MCF 10A (cell line): ENCODE measurements at regions of chr1 and their contacts with region 1.

Region 1: DNA sequence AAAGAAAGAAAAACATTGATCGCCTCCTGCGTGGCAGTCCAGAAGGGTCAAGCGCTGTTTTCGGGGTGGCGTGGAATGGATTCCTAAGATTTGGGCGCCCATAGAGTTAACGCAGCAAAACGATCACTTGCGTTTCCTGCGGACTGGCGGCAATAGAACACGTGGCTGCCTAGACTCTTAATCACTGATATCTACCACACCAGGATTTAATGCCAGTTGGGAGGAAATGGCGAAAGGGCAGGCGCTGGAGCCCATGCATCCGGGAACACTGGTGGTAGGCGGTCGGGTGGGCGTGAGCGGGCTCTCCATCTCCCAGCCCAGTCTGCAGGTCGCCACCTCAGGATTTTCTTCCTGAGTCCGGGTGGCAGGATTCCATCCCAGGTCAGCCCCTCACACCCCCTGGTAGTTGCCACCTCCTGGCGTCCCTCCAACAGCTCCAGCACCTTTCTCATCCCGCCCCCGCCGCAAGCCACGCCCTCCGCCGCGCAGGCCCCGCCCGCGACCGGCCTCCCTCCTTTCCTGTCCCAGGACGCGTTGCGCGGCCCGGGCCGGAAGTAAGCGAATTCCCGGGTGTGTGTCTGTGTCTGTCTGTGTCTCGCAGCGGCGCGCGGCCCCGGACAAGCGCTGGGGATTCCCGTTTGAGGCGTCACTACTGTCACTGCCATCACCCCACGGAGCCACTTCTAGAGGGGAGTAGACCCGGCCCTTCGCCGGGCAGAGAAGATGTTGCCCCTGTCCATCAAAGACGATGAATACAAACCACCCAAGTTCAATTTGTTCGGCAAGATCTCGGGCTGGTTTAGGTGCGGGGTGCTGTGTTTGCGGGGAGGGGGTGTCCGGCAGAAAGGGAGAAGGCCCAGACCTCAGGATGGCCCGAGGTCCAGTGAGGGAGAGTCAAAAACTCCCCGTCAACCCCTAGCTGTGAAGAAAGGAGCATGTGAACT is at the start of gene SLC30A7:
- DNase-seq: peak; percentile 96
- H3K4me3 Mint-ChIP-seq: peak within 1 kb of the TSS; percentile 96
- H3K27ac Mint-ChIP-seq: peak within 1 kb of the TSS; percentile 99
- H3K4me1 Mint-ChIP-seq: peaks cover 6% of the 10 kb centered on the region
- H3K27me3 Mint-ChIP-seq: no peaks in the 10 kb centered on the region
- CTCF ChIP-seq: no peak
- total RNA-seq, gene SLC30A7: 55.0 and 59.5 TPM in 2 replicates

Region 2: DNA sequence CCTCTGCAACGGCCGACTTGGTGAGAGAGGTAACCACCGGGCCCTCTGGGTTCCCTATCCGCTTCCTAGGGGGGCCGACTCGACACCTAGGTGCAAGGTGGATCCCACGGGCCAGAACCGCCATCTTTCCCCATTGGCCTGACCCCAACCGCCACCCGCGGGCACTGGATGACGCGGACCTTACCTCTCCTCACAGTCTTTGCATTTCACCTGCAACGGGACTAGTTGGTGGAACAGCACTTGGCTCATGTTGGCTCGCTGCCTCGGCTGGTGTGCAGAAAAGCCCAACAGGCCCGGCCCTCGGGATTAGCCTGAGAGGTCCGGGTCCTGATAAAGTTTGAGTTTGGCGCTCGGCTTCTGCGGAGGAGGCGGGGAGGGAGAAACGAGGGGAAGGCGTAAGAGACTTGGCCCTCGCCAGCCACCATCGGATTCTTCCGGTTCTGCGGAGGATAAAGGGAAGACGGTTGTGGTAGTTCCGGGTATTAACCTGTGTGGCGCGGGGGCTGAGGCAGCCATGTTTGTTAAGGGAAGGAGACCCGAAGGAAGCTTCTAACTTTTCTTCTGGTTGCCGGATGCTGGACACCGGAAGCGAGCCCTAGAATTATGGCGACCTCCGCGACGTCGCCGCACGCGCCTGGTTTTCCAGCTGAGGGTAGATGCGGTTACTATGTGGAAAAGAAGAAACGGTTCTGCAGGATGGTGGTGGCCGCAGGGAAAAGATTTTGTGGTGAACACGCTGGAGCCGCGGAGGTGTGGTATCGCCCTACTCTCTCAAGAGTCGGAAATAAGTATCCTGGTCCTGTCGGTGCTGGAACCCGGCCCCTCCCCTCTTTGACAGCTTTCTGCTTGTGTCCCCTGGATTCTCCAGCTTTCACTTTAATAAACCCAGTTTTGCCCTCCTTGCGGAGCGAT is 763.0 kb before region 1 on chr1 and contains the starts of genes SASS6 and TRMT13:
- CTCF ChIA-PET with region 1: no interaction called
- POLR2A ChIA-PET with region 1: interaction called, 7 read pairs
- intact Hi-C with region 1: loop called (anchors 10 kb)
- DNase-seq: peak; percentile 98
- H3K4me3 Mint-ChIP-seq: peak within 1 kb of the TSS; percentile 86
- H3K27ac Mint-ChIP-seq: peak within 1 kb of the TSS; percentile 75
- H3K4me1 Mint-ChIP-seq: peaks cover 19% of the 10 kb centered on the region
- H3K27me3 Mint-ChIP-seq: no peaks in the 10 kb centered on the region
- CTCF ChIP-seq: no peak
- total RNA-seq, gene SASS6: 6.6 and 7.5 TPM in 2 replicates
- total RNA-seq, gene TRMT13: 24.2 and 25.5 TPM in 2 replicates

Region 3: DNA sequence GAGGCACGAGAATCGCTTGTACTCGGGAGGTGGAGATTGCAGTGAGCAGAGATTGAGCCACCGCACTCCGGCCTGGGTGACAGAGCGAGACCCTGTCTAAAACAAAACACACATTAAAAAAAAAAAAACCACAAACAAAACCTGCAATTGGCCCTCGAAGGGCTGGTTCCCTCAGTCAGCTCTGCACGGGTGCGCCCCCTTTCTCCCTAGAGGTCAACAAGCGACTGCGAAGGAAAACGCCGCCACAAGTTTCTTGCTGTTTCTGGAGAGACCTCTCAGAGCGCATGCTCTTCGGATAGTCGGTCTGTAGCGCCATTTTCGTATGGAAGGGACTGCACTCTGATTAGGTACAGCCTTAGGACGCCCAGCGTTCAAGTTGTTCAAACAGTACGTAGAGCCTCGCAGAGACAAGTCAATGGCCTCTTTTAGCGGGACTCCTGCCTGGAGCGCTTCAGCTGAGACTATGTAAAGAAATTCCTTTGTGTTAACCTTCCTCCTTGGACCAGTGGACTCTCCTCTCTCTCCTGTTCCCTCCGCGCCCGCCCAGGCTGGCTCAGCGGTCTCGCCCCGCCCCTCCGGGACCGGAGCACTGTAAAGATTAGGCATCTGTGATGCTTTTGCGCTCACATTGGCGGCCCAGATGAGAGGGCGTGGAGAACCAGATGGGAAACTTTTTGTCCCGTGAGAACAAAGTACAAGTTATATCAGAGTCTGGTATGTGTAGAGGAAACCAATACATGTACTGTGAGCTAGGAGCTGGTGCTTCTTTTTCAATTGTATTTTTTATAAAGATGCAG is 544.5 kb before region 1 on chr1:
- CTCF ChIA-PET with region 1: interaction called, 3 read pairs
- POLR2A ChIA-PET with region 1: interaction called, 15 read pairs
- intact Hi-C with region 1: no loop called
- DNase-seq: peak; percentile 91
- H3K4me3 Mint-ChIP-seq: peak overlapping the region; percentile 92
- H3K27ac Mint-ChIP-seq: peak overlapping the region; percentile 86
- H3K4me1 Mint-ChIP-seq: peaks cover 22% of the 10 kb centered on the region
- H3K27me3 Mint-ChIP-seq: no peaks in the 10 kb centered on the region
- CTCF ChIP-seq: peak; percentile 32

Region 4: DNA sequence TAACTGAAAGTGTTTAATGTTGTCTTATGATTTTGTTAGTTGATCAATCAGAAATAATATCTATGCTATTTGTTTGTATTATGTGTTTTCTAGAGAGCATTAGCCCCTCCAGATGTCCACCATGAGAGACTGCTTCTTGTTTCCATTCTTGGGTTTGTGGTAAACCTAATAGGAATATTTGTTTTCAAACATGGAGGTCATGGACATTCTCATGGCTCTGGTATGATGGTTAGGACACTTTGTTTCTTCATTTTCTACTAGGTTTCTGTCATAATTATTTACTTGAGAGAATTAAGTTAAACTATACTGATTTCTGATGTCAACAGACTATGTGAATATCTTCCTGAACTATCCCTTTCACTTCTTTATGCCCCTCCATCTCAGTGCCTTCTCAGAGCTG is 16.2 kb after region 1 on chr1:
- CTCF ChIA-PET with region 1: no interaction called
- POLR2A ChIA-PET with region 1: interaction called, 58 read pairs
- intact Hi-C with region 1: no loop called
- DNase-seq: no peak
- H3K4me3 Mint-ChIP-seq: no peak overlapping the region
- H3K27ac Mint-ChIP-seq: no peak overlapping the region
- H3K4me1 Mint-ChIP-seq: peaks cover 14% of the 10 kb centered on the region
- H3K27me3 Mint-ChIP-seq: no peaks in the 10 kb centered on the region
- CTCF ChIP-seq: no peak

Region 5: DNA sequence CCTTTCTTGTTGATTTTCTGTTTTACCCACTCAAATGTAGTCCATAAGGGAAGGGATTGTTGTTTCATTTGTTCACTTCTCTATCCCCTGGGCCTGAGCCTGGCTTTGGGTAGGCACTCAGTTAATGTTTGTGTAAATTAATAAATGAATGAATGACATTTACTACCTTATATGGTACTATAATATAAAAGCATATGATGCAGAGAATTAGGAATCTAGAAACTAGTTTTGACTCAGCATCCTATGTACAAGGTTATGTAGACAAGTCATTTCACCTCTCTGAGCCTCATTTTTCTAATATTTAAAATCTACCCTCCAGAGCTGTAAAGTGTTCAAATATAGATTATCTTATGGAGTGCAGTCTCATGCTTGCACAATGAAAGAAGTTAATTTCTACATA is 272.1 kb after region 1 on chr1:
- CTCF ChIA-PET with region 1: no interaction called
- POLR2A ChIA-PET with region 1: no interaction called
- intact Hi-C with region 1: no loop called
- DNase-seq: no peak
- H3K4me3 Mint-ChIP-seq: no peak overlapping the region
- H3K27ac Mint-ChIP-seq: no peak overlapping the region
- H3K4me1 Mint-ChIP-seq: no peaks in the 10 kb centered on the region
- H3K27me3 Mint-ChIP-seq: no peaks in the 10 kb centered on the region
- CTCF ChIP-seq: no peak